ENCODE measurements at regions of chr1 and their contacts with region 1.

Region 1: DNA sequence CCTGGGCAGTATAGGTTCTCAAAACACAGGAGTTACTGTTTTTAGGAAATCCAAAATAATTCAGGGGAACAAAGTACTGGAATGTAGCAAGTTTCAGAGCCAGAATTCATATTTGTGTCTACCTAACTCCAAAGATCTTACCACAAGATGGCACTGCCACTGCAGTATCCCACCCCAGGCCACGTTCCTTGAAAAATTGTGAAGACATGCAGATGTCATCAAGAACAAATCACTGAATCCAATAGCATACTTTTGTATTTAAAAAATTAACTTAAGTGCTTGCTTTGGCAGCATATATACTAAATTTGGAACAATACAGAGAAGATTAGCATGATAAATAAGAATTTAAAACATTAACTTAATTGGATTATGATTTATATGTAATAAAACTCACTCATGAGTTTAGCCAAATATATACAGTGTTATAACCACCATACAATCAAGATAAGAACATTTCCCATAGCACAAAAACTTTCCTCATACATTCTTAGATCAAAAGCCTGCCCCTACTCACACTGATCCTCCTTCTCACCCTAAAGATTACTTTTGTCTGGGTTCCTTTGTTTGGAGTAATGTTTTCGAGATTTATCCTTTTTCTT is 209.9 kb downstream of the FAF1 start:
- DNase-seq: peak; percentile 26
- H3K4me3 ChIP-seq: no peak overlapping the region
- H3K27ac ChIP-seq: no peak overlapping the region
- H3K4me1 ChIP-seq: peaks cover 0 to 10% of the 10 kb centered on the region in 2 experiments; a peak in 1 of 4 replicates
- H3K27me3 ChIP-seq: no peaks in the 10 kb centered on the region
- CTCF ChIP-seq: peak; percentile 72
- EP300 ChIP-seq: no peak
- RAD21 ChIP-seq: peak; percentile 61

Region 2: GRCh38 chr1:50774759-50775351 is 24.7 kb after region 1 on chr1:
- CTCF ChIA-PET with region 1: interaction called, 10 read pairs
- POLR2A ChIA-PET with region 1: no interaction called
- DNase-seq: peak; percentile 55
- H3K4me3 ChIP-seq: no peak overlapping the region
- H3K27ac ChIP-seq: no peak overlapping the region
- H3K4me1 ChIP-seq: no peaks in the 10 kb centered on the region
- H3K27me3 ChIP-seq: no peaks in the 10 kb centered on the region
- CTCF ChIP-seq: peak; percentile 82
- EP300 ChIP-seq: no peak
- RAD21 ChIP-seq: peak; percentile 84

Measured in SK-N-SH (cell line).